ENCODE measurements at regions of chr15 and their contacts with region 1.

Region 1: GRCh38 chr15:63749330-63749942 is 84.3 kb downstream of the HERC1 start:
- DNase-seq: no peak
- ATAC-seq: no peak
- H3K4me3 ChIP-seq: no peak overlapping the region
- H3K27ac ChIP-seq: no peak overlapping the region
- H3K4me1 ChIP-seq: no peaks in the 10 kb centered on the region
- H3K27me3 ChIP-seq: no peaks in the 10 kb centered on the region
- CTCF ChIP-seq: no peak
- POLR2A ChIP-seq: no peak

Region 2: DNA sequence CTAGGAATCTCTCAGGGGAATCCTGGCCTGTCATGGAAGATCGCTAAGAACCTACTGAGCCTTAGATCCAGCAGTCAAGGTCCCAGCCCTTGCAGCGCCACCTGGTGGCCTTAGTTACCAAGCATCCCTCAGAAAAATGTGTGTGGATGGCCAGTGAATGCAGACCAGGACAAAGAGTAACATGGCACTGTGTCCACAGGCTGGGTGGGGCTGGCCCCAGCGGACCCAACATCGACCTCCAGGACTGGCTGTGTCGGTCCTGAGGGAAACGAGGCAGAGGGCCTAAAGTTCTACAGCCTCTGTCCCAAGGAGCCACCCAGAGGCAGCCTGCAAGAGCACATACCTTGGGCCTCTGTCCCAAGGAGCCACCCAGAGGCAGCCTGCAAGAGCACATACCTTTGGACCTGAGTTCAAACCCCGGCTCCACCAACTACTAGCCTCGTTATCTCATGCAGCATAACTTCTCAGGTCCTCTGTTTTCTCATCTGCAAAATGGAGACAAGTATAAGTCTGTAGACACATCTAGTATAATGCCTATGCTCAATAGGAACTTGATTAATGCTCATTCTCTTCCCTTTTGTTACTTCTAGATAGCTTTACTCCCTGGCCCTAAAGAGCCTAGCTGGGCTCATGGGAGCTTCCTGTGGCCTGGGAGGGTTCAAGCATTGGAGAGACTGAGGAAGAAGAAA is 141.8 kb after region 1 on chr15:
- intact Hi-C with region 1: loop called in 1 of 2 experiments (anchors 10 kb)
- DNase-seq: peak; percentile 82 to 84 (median 83)
- ATAC-seq: peak; percentile 59 to 75 (median 71)
- H3K4me3 ChIP-seq: no peak overlapping the region
- H3K27ac ChIP-seq: no peak overlapping the region
- H3K4me1 ChIP-seq: peaks cover 0 to 32% (median 10%) of the 10 kb centered on the region in 4 donors
- H3K27me3 ChIP-seq: no peaks in the 10 kb centered on the region
- CTCF ChIP-seq: peak; percentile 88 to 95 (median 90)
- POLR2A ChIP-seq: no peak

Region 3: DNA sequence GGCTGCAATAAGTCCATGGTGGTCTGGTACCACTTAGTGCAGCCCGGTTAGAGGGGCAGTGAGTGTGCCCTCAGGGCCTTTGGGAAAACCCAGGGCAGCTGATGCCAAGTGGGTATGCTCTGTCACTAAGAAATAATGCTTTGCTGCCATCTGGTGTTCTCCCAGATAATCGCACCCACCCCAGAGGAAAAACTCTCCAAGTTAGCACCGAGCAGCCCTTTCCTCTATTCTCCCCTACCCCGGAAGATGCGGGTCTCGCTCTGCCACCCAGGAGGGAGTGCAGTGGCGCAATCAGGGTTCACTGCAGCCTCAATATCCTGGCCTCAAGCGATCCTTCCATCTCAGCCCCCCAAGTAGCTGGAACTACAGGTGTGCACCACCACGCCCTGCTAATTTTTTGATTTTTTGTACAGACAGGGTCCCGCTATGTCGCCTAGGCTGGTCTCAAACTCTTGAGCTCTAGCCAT is 318.2 kb after region 1 on chr15:
- intact Hi-C with region 1: loop called in 1 of 2 experiments (anchors 10 kb)
- DNase-seq: peak; percentile 49 to 67 (median 61)
- ATAC-seq: peak; percentile 57 to 74 (median 62)
- H3K4me3 ChIP-seq: no peak overlapping the region
- H3K27ac ChIP-seq: no peak overlapping the region
- H3K4me1 ChIP-seq: peaks cover 0 to 50% (median 21%) of the 10 kb centered on the region in 4 donors
- H3K27me3 ChIP-seq: no peaks in the 10 kb centered on the region
- CTCF ChIP-seq: peak; percentile 82 to 85 (median 84)
- POLR2A ChIP-seq: no peak

Measured in right lobe of liver (tissue), 6 donors.